Calu3 (cell line): ENCODE measurements at regions of chr1 and their contacts with region 1.

Region 1: GRCh38 chr1:199089393-199090122 is 450.7 kb downstream of the PTPRC start:
- DNase-seq: no peak
- H3K4me3 Mint-ChIP-seq: no peak overlapping the region
- H3K27ac Mint-ChIP-seq: no peak overlapping the region
- H3K4me1 Mint-ChIP-seq: no peaks in the 10 kb centered on the region
- H3K27me3 Mint-ChIP-seq: no peaks in the 10 kb centered on the region
- CTCF ChIP-seq: no peak

Region 2: GRCh38 chr1:199042193-199042592 is 47.4 kb before region 1 on chr1:
- CTCF ChIA-PET with region 1: no interaction called
- intact Hi-C with region 1: loop called (anchors 2 kb)
- DNase-seq: no peak
- H3K4me3 Mint-ChIP-seq: no peak overlapping the region
- H3K27ac Mint-ChIP-seq: no peak overlapping the region
- H3K4me1 Mint-ChIP-seq: peaks cover 8% of the 10 kb centered on the region
- H3K27me3 Mint-ChIP-seq: no peaks in the 10 kb centered on the region
- CTCF ChIP-seq: no peak